Caco-2 (cell line): ENCODE measurements at regions of chr7 and their contacts with region 1.

Region 1: GRCh38 chr7:2621061-2621828 is 10.5 kb upstream of the TTYH3 start:
- DNase-seq: peak; percentile 57 to 84
- H3K4me3 ChIP-seq: peak overlapping the region; percentile 20
- H3K4me3 Mint-ChIP-seq: peak overlapping the region; percentile 29
- H3K27ac Mint-ChIP-seq: peak overlapping the region; percentile 69
- H3K4me1 ChIP-seq: peaks cover 36% of the 10 kb centered on the region
- H3K4me1 Mint-ChIP-seq: peaks cover 13% of the 10 kb centered on the region
- H3K27me3 ChIP-seq: no peaks in the 10 kb centered on the region
- H3K27me3 Mint-ChIP-seq: no peaks in the 10 kb centered on the region
- CTCF ChIP-seq: no peak

Region 2: DNA sequence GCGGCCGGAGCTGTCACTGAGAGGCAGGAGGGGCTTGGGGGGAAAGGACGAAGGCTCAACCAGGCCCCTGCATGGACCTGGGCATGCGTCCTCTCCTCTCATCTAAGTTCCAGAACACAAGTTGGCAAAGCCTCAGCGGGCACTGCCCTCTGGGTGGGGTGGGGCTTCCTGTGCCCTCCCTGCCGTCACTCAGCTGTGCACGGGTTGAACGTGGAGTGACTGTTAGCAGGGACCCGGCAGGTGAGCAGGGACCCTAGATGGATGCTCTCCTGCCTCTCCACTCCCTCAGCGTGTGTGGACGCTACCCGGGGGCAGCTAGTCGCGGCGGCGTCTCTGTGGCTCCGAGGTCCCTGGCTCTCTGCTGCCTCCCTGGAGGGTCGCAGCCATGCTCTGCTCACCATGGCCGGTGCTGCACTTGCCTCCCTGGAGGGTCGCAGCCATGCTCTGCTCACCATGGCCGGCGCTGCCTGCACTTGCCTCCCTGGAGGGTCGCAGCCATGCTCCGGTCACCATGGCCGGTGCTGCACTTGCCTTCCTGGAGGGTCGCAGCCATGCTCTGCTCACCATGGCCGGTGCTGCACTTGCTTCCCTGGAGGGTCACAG is 25.9 kb before region 1 on chr7:
- CTCF ChIA-PET with region 1: no interaction called
- POLR2A ChIA-PET with region 1: interaction called, 16 read pairs
- intact Hi-C with region 1: no loop called
- DNase-seq: no peak
- H3K4me3 ChIP-seq: no peak overlapping the region
- H3K4me3 Mint-ChIP-seq: no peak overlapping the region
- H3K27ac Mint-ChIP-seq: no peak overlapping the region
- H3K4me1 ChIP-seq: no peaks in the 10 kb centered on the region
- H3K4me1 Mint-ChIP-seq: no peaks in the 10 kb centered on the region
- H3K27me3 ChIP-seq: no peaks in the 10 kb centered on the region
- H3K27me3 Mint-ChIP-seq: no peaks in the 10 kb centered on the region
- CTCF ChIP-seq: no peak